CD8-positive, alpha-beta memory T cell (primary cell): ENCODE measurements at regions of chr17 and their contacts with region 1.

Region 1: DNA sequence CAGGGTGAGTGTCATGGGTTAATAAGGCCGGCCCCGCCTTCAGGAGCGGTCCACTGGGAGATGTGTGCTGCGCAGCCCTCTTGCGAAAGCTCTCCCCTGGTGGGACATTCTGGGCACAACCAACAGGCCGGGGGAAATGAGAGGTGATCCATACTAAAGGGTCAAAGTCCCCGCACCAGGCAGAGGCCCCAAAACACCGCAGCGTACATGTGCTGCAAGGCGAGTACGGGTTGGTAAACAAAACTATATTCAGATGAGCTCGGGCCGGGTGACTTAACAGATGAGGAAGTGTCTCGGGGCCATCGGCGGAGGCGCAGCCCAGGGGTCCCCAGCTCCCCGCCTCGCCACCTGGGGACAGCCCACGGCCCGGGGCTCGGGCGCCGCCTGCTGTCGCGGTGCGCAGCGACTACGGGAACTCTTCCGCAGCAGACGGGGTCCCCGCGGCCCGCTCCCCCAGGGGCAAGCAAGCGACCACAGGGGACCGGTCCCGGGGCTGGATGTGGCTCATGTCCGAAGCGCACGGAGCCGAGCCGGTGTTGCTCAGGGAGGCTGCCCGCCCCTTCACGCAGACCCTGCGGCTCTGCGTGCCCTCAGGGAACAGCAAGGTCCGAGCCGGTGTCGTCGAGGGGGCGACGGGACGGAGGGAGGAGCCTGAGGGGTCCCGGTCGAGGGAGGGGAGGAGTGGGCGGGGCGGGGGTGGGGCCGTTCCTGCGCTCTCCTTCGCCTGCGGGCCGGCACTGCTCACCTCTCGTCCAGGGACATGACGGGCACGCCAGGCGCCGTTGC is at the start of gene RAB37:
- DNase-seq: peak; percentile 38 to 70 (median 52)
- H3K4me3 ChIP-seq: peak within 1 kb of the TSS; percentile 98
- H3K4me3 Mint-ChIP-seq: peak within 1 kb of the TSS; percentile 91 to 99 (median 97)
- H3K27ac ChIP-seq: peak within 1 kb of the TSS; percentile 63
- H3K27ac Mint-ChIP-seq: peak within 1 kb of the TSS; percentile 80 to 95 (median 91)
- H3K4me1 ChIP-seq: peaks cover 58% of the 10 kb centered on the region
- H3K4me1 Mint-ChIP-seq: peaks cover 42 to 49% (median 48%) of the 10 kb centered on the region in 3 donors
- H3K27me3 ChIP-seq: no peaks in the 10 kb centered on the region
- H3K27me3 Mint-ChIP-seq: no peaks in the 10 kb centered on the region
- total RNA-seq, gene RAB37: 5.8 to 6.0 TPM

Region 2: GRCh38 chr17:74677558-74678466 is 58.9 kb before region 1 on chr17:
- CTCF ChIA-PET with region 1: interaction called, 29 read pairs
- POLR2A ChIA-PET with region 1: interaction called, 3 read pairs
- DNase-seq: no peak
- H3K4me3 ChIP-seq: no peak overlapping the region
- H3K4me3 Mint-ChIP-seq: peak overlapping the region in 4 of 7 donors; percentile 10 to 48 (median 29)
- H3K27ac ChIP-seq: no peak overlapping the region
- H3K27ac Mint-ChIP-seq: peak overlapping the region in 3 of 8 donors; percentile 9 to 58 (median 31)
- H3K4me1 ChIP-seq: peaks cover 15% of the 10 kb centered on the region
- H3K4me1 Mint-ChIP-seq: peaks cover 15 to 22% (median 18%) of the 10 kb centered on the region in 3 donors
- H3K27me3 ChIP-seq: peaks cover 3% of the 10 kb centered on the region
- H3K27me3 Mint-ChIP-seq: peaks cover 25 to 42% of the 10 kb centered on the region in 2 donors

Region 3: DNA sequence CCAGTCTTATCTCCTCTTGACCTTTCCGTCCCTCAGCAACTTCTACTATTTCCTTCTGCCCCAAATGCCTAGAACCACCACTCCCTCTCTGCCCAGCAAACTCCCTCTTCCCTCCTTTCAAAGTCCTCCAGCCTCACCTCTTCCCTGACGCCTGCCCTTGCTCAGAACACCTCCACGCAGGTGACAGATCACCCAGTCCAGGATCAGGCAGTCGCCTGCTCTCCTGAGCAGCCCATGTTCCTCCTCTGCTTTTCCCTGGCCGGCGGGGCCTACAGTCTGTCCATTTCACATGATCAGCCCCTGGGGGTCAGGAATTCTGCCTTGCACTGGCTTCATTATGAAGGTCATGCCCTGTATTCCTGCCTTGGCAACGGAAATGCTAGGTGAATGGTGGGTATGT is 24.4 kb before region 1 on chr17:
- CTCF ChIA-PET with region 1: interaction called, 10 read pairs
- POLR2A ChIA-PET with region 1: interaction called, 7 read pairs
- DNase-seq: no peak
- H3K4me3 ChIP-seq: no peak overlapping the region
- H3K4me3 Mint-ChIP-seq: no peak overlapping the region
- H3K27ac ChIP-seq: no peak overlapping the region
- H3K27ac Mint-ChIP-seq: peak overlapping the region in 2 of 8 donors; percentile 9 to 61
- H3K4me1 ChIP-seq: no peaks in the 10 kb centered on the region
- H3K4me1 Mint-ChIP-seq: peaks cover 9 to 13% (median 11%) of the 10 kb centered on the region in 3 donors
- H3K27me3 ChIP-seq: peaks cover 5% of the 10 kb centered on the region
- H3K27me3 Mint-ChIP-seq: peaks cover 4 to 19% of the 10 kb centered on the region in 2 donors

Region 4: GRCh38 chr17:74748529-74749365 is 12.0 kb after region 1 on chr17 and contains the start of gene NHERF1:
- CTCF ChIA-PET with region 1: interaction called, 203 read pairs
- POLR2A ChIA-PET with region 1: interaction called, 39 read pairs
- DNase-seq: peak; percentile 91 to 95 (median 93)
- H3K4me3 ChIP-seq: peak within 1 kb of the TSS; percentile 95
- H3K4me3 Mint-ChIP-seq: peak within 1 kb of the TSS; percentile 95 to 100 (median 98)
- H3K27ac ChIP-seq: peak within 1 kb of the TSS; percentile 76
- H3K27ac Mint-ChIP-seq: peak within 1 kb of the TSS; percentile 84 to 96 (median 93)
- H3K4me1 ChIP-seq: peaks cover 72% of the 10 kb centered on the region
- H3K4me1 Mint-ChIP-seq: peaks cover 58 to 71% (median 65%) of the 10 kb centered on the region in 3 donors
- H3K27me3 ChIP-seq: no peaks in the 10 kb centered on the region
- H3K27me3 Mint-ChIP-seq: no peaks in the 10 kb centered on the region
- total RNA-seq, gene NHERF1: 131 to 133 TPM

Region 5: GRCh38 chr17:74776044-74776977 is 39.6 kb after region 1 on chr17 and contains the start of gene NAT9:
- CTCF ChIA-PET with region 1: interaction called, 33 read pairs
- POLR2A ChIA-PET with region 1: interaction called, 7 read pairs
- DNase-seq: peak; percentile 97 to 99 (median 99)
- H3K4me3 ChIP-seq: peak within 1 kb of the TSS; percentile 91
- H3K4me3 Mint-ChIP-seq: peak within 1 kb of the TSS; percentile 97 to 99 (median 98)
- H3K27ac ChIP-seq: peak within 1 kb of the TSS; percentile 73
- H3K27ac Mint-ChIP-seq: peak within 1 kb of the TSS; percentile 93 to 98 (median 98)
- H3K4me1 ChIP-seq: peaks cover 59% of the 10 kb centered on the region
- H3K4me1 Mint-ChIP-seq: peaks cover 60 to 83% (median 80%) of the 10 kb centered on the region in 3 donors
- H3K27me3 ChIP-seq: no peaks in the 10 kb centered on the region
- H3K27me3 Mint-ChIP-seq: no peaks in the 10 kb centered on the region
- total RNA-seq, gene NAT9: 42.7 to 44.5 TPM

Region 6: DNA sequence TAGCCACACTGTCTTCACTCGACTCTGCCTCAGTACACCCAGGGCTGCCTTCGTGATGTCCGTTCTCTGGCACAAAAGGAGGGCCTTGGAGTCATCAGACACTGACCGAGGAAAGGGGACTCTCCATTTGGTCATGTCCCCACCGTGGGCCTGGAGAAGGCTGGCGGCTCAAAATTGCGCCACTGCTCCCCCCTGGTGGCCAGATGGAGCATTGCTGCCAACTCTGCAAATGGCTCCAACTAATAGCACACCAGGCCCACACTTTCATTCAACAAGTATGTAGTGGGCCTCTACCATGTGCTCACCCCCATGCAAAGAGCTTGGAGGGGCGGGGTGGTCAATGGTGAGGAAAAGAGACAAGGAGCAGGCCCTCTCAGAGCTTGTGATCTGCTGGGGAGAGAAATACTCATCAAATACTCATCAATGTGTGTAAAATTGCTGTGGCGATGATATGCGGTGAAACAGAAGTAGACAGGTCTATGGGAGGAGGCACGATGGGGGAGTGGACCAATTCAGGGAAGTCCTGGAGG is 128.2 kb after region 1 on chr17:
- CTCF ChIA-PET with region 1: interaction called, 20 read pairs
- POLR2A ChIA-PET with region 1: interaction called, 5 read pairs
- DNase-seq: peak; percentile 50 to 75 (median 63)
- H3K4me3 ChIP-seq: no peak overlapping the region
- H3K4me3 Mint-ChIP-seq: no peak overlapping the region
- H3K27ac ChIP-seq: no peak overlapping the region
- H3K27ac Mint-ChIP-seq: peak overlapping the region in 3 of 8 donors; percentile 42 to 67 (median 44)
- H3K4me1 ChIP-seq: peaks cover 17% of the 10 kb centered on the region
- H3K4me1 Mint-ChIP-seq: peaks cover 10 to 22% (median 12%) of the 10 kb centered on the region in 3 donors
- H3K27me3 ChIP-seq: peaks cover 14% of the 10 kb centered on the region
- H3K27me3 Mint-ChIP-seq: peaks cover 10 to 14% of the 10 kb centered on the region in 2 donors